ENCODE measurements at regions of chr20 and their contacts with region 1.

Region 1: GRCh38 chr20:24289737-24290481 is 179.5 kb upstream of the SYNDIG1 start:
- DNase-seq: peak in 8 of 35 experiments; percentile 2 to 13 (median 8)
- ATAC-seq: peak; percentile 31 to 77 (median 62)
- H3K4me3 ChIP-seq: no peak overlapping the region
- H3K4me3 Mint-ChIP-seq: peak overlapping the region in 1 of 3 donors; percentile 70
- H3K27ac ChIP-seq: no peak overlapping the region
- H3K27ac Mint-ChIP-seq: peak overlapping the region; percentile 58 to 85
- H3K4me1 ChIP-seq: peaks cover 9 to 20% of the 10 kb centered on the region in 2 experiments
- H3K4me1 Mint-ChIP-seq: peaks cover 16 to 22% (median 21%) of the 10 kb centered on the region in 3 donors
- H3K27me3 ChIP-seq: no peaks in the 10 kb centered on the region
- H3K27me3 Mint-ChIP-seq: no peaks in the 10 kb centered on the region

Region 2: DNA sequence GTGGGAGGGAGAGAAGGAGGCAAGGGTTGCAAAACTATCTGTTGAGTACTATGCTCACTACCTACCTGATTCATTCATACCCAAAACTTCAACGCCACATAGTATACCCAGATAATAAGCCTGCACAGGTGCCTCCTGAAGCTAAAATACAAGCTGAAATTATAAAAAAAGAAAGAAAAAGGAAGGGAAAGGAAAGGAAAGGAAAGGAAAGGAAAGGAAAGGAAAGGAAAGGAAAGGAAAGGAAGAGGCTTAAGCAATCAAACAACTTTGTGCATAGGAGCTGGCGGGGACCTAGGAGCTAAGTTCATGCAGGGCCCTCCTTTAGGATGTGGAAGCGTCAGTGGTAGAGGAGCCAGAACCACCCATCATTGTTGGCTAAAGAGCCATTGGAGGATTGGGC is 70.6 kb after region 1 on chr20:
- CTCF ChIA-PET with region 1: no interaction called
- POLR2A ChIA-PET with region 1: interaction called in 1 of 2 experiments, 14 read pairs
- DNase-seq: no peak
- ATAC-seq: no peak
- H3K4me3 ChIP-seq: no peak overlapping the region
- H3K4me3 Mint-ChIP-seq: no peak overlapping the region
- H3K27ac ChIP-seq: no peak overlapping the region
- H3K27ac Mint-ChIP-seq: no peak overlapping the region
- H3K4me1 ChIP-seq: no peaks in the 10 kb centered on the region
- H3K4me1 Mint-ChIP-seq: peaks cover 0 to 11% (median 0%) of the 10 kb centered on the region in 3 donors
- H3K27me3 ChIP-seq: peaks cover 0 to 15% of the 10 kb centered on the region in 2 experiments
- H3K27me3 Mint-ChIP-seq: peaks cover 3 to 5% of the 10 kb centered on the region in 2 donors